Activated CD4-positive, alpha-beta T cell treated with anti-CD3 and anti-CD28 coated beads for 36 hours (primary cell): ENCODE measurements at regions of chr15 and their contacts with region 1.

Region 1: GRCh38 chr15:69413822-69414700 is at the start of gene KIF23:
- DNase-seq: peak; percentile 96
- ATAC-seq: peak; percentile 95
- H3K4me3 Mint-ChIP-seq: peak within 1 kb of the TSS; percentile 85
- H3K27ac Mint-ChIP-seq: peak within 1 kb of the TSS; percentile 69
- H3K4me1 Mint-ChIP-seq: peaks cover 13% of the 10 kb centered on the region
- H3K27me3 Mint-ChIP-seq: peaks cover 5% of the 10 kb centered on the region
- total RNA-seq, gene KIF23: 47.2 to 48.0 TPM

Region 2: GRCh38 chr15:69035205-69035917 is 378.7 kb before region 1 on chr15:
- CTCF ChIA-PET with region 1: no interaction called
- POLR2A ChIA-PET with region 1: no interaction called
- intact Hi-C with region 1: no loop called
- DNase-seq: peak; percentile 27
- ATAC-seq: no peak
- H3K4me3 Mint-ChIP-seq: no peak overlapping the region
- H3K27ac Mint-ChIP-seq: no peak overlapping the region
- H3K4me1 Mint-ChIP-seq: peaks cover 12% of the 10 kb centered on the region
- H3K27me3 Mint-ChIP-seq: peaks cover 26% of the 10 kb centered on the region

Region 3: DNA sequence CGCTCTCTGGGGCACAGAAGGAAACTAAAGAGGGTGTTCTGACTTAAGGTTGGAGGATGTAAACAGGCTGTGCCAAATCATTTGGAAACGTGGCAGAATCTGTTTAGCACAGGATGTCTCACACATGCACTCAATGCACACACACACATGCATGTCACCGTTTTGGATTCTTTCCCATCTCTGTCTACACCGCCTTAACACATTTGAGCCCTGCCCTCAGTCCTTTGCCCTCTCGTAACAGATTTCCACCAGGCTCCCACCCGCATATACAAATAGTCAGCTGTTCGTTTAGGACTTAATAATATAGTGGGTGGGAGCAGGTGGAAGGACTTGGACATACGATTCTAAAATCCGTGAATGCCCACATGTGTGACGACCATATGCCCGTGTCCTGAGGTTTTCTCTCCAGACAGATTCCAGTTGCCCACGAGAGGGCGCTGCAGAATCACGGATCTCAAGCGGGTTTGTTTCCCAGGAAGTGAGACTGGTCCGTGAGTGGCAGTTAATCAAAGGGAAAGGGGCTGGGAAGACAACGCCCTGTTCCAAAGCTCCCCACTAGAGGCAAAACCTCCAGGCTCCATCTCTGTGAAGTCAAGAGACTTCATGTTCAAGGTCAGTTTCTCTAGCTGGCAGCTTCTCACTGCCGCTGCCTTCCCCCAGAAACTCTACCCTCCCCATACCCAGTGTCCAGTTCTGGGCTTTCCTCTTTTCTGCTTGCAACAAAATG is 355.1 kb before region 1 on chr15:
- CTCF ChIA-PET with region 1: interaction called, 3 read pairs
- POLR2A ChIA-PET with region 1: no interaction called
- intact Hi-C with region 1: loop called in 1 of 2 experiments (anchors 1 kb)
- DNase-seq: peak; percentile 86
- ATAC-seq: peak; percentile 55
- H3K4me3 Mint-ChIP-seq: no peak overlapping the region
- H3K27ac Mint-ChIP-seq: no peak overlapping the region
- H3K4me1 Mint-ChIP-seq: peaks cover 21% of the 10 kb centered on the region
- H3K27me3 Mint-ChIP-seq: peaks cover 13% of the 10 kb centered on the region

Region 4: DNA sequence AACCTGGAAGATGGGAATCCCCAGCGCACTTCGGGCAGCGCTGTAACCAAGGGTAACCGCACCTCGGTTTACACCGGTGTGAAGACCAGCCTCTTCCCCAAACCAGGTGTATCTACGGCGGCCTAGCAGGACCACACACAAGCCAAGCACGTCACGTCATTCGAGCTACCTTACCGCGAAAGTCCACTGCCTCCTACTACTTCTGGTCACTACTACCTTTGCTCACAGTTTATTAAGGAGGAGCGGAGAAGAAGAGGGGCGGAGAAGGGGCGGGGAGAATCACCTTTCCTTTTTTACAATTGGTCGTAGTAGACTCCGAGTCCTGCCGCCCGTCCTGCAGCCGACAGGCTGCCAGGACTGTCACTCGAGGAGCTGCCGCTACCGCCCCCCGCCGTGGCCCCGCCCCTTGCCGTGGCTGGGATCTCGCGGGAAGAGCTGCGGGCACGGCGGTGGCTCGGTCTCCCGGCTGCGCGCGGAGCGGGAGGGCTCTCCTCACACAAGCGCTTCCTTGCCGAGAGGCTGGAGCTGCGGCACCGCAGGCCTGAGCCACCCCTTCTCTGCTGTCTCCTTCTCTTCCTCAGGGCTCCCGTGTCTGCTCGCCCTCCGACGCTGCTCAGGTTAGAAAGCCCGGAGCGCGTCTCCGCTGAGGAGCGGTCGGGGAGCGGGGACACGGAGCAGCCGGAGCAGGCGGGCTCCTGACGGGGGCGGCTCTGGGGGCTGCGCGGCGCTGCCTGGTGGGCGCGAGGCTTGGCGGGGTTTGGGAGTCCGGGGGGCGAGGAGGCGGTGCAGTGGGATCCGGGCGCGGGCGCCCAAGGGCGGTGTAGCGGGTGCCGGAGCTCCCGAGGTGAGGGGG is 253.7 kb before region 1 on chr15 and contains the start of gene GLCE:
- CTCF ChIA-PET with region 1: no interaction called
- POLR2A ChIA-PET with region 1: interaction called, 3 read pairs
- intact Hi-C with region 1: loop called (anchors 1 to 2 kb)
- DNase-seq: peak; percentile 96
- ATAC-seq: peak; percentile 98
- H3K4me3 Mint-ChIP-seq: peak within 1 kb of the TSS; percentile 90
- H3K27ac Mint-ChIP-seq: peak within 1 kb of the TSS; percentile 84
- H3K4me1 Mint-ChIP-seq: peaks cover 16% of the 10 kb centered on the region
- H3K27me3 Mint-ChIP-seq: no peaks in the 10 kb centered on the region
- total RNA-seq, gene GLCE: 3.6 to 4.2 TPM

Region 5: DNA sequence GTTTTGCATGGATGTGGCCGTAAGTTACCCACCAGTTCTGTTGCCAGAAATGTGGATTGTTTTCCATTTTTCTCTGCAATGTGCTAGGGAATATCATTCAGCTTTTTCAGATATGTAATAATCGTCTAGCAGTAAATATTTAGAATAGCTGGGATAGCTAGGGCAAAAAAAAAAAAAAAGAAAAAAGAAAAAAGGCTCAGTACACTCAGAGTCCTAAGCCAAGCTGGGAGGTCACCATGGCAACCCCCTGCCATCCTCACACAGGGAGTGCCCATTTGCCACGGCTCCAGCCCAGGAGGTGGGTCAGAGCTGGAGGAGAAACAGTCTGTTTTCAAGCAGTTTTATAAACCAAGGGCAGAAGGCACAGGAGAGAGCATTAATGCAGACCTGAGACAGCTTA is 90.1 kb before region 1 on chr15:
- CTCF ChIA-PET with region 1: no interaction called
- POLR2A ChIA-PET with region 1: no interaction called
- intact Hi-C with region 1: loop called in 1 of 2 experiments (anchors 1 kb)
- DNase-seq: no peak
- ATAC-seq: no peak
- H3K4me3 Mint-ChIP-seq: no peak overlapping the region
- H3K27ac Mint-ChIP-seq: no peak overlapping the region
- H3K4me1 Mint-ChIP-seq: peaks cover 22% of the 10 kb centered on the region
- H3K27me3 Mint-ChIP-seq: peaks cover 18% of the 10 kb centered on the region

Region 6: DNA sequence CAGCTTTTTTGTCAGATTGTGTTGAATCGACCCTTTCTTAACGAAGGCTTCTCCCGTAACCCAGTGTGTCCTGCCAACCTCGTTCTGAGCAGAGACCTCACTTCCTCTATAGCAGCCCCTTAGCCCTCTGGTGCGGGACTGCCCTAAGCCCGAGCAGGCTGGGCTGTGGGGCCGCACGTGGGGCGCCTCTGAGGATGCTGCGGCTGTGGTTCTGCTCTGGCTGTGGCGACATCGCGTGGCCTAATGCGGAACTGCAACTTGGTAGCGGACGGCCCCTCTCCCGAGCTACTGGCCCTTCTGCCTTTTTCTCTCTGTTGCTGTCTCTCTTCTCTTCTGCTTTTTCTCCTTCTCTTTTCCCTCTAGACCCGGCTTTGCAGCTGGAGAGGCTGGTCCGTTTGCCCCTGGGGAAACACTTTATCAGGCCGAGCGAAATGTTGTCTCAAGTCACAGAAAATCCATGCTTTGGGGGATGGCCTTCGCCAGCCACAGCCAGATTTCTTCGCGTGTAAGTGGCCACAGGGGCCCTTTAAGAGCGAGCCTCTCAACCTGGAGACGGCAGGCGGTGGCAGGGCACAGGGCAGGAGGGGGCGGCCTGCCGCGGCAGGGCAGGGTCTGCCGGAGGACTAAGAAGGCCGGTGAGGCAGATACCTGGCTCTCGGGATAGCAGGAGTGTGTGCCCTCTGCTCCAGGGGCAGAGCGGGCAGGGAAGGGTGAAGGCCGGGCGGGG is 19.3 kb before region 1 on chr15:
- CTCF ChIA-PET with region 1: interaction called, 10 read pairs
- POLR2A ChIA-PET with region 1: interaction called, 3 read pairs
- intact Hi-C with region 1: no loop called
- DNase-seq: peak; percentile 91
- ATAC-seq: peak; percentile 95
- H3K4me3 Mint-ChIP-seq: no peak overlapping the region
- H3K27ac Mint-ChIP-seq: no peak overlapping the region
- H3K4me1 Mint-ChIP-seq: peaks cover 10% of the 10 kb centered on the region
- H3K27me3 Mint-ChIP-seq: no peaks in the 10 kb centered on the region

Region 7: GRCh38 chr15:69452692-69453521 is 38.8 kb after region 1 on chr15 and contains the start of gene RPLP1:
- CTCF ChIA-PET with region 1: interaction called, 7 read pairs
- POLR2A ChIA-PET with region 1: interaction called, 21 read pairs
- intact Hi-C with region 1: loop called (anchors 1 kb)
- DNase-seq: peak; percentile 97
- ATAC-seq: peak; percentile 94
- H3K4me3 Mint-ChIP-seq: peak within 1 kb of the TSS; percentile 91
- H3K27ac Mint-ChIP-seq: peak within 1 kb of the TSS; percentile 99
- H3K4me1 Mint-ChIP-seq: peaks cover 24% of the 10 kb centered on the region
- H3K27me3 Mint-ChIP-seq: no peaks in the 10 kb centered on the region
- total RNA-seq, gene RPLP1: 1,576 to 2,330 TPM

Region 8: DNA sequence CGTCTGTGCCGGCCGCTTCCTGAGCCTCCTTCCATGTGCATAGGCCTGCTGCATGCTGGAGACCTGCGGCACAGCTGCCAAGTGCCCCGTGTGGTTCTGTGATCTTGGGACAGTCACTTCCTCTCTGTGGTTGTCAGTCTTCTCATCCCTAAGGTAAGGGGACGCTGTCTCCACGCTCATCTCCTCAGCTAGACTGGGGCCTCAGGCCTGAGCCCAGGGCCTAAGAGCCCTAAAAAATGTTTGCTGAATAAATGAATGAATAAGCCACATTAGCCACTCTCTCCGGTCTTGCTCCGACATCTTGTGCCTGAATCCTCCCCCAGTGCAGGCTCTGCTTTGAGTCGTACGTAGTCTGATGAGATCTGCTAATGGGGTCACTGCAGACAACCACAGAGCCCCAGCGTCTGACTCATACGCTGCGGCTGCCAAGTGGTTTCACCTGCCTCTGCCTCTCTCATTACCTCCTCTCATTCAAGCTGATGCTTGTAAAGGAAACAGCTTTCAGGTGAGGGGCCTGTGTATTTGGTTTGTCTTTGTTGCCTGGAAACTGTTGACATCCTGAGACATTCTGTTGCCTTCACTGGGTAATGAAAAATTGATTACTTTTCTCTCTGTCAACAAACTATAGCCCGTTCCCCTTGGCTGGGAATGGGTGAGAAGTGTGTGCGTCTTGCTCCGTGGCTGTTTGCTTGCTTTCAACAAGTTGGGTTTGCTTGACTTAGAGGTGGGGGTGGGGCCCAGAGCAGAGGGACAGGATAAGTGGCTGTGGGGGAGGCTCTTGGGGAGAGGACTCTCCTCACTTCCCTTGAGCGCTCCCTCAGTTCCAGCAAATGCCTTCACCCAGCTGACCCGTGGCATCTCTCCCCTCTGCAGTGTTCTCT is 54.4 kb after region 1 on chr15:
- CTCF ChIA-PET with region 1: interaction called, 3 read pairs
- POLR2A ChIA-PET with region 1: no interaction called
- intact Hi-C with region 1: loop called in 1 of 2 experiments (anchors 1 kb)
- DNase-seq: peak; percentile 91
- ATAC-seq: peak; percentile 94
- H3K4me3 Mint-ChIP-seq: peak overlapping the region; percentile 59
- H3K27ac Mint-ChIP-seq: peak overlapping the region; percentile 85
- H3K4me1 Mint-ChIP-seq: peaks cover 27% of the 10 kb centered on the region
- H3K27me3 Mint-ChIP-seq: no peaks in the 10 kb centered on the region